Endothelial cell of umbilical vein (primary cell): ENCODE measurements at regions of chr5 and their contacts with region 1.

Region 1: DNA sequence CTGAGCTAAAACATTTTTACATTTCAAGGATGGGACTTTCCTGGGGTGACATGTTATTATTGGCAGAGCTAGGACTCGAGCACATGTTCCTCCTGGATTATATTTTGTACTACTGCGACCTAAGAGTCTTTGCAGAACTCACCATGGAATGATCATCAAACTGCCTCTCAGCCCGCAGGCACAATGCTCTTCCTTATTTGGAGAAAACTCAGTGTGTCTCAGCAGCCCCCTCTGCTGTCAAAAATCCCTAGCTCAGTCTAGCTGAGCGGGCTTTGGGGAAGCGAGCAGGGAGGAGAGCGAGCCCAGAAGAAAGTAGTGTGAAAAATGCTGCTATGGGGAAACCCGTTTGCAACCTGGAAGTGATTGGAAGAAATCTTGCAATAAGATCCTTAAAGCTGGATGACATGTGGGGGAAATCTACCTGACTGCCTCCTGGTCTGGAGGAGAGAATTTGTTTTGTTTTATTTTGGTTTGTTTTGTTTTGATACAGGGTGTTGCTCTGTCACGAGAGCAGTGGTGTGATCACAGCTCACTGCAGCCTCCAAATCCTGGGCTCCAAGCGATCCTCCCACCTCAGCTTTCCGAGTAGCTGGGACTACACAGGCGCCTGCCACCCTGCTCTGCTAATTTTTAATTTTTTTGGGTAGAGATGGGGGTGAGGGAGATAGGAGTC is 89.9 kb upstream of the CLINT1 start:
- DNase-seq: peak; percentile 90
- H3K4me3 ChIP-seq: no peak overlapping the region
- H3K27ac ChIP-seq: no peak overlapping the region
- H3K4me1 ChIP-seq: no peaks in the 10 kb centered on the region
- H3K27me3 ChIP-seq: peaks cover 0 to 4% of the 10 kb centered on the region in 2 experiments
- CTCF ChIP-seq: peak; percentile 83 to 84
- POLR2A ChIP-seq: no peak

Region 2: GRCh38 chr5:157812086-157812485 is 136.8 kb before region 1 on chr5:
- CTCF ChIA-PET with region 1: interaction called, 59 read pairs
- POLR2A ChIA-PET with region 1: no interaction called
- dilution Hi-C with region 1: no loop called
- intact Hi-C with region 1: loop called (anchors 1 kb)
- DNase-seq: no peak
- H3K4me3 ChIP-seq: no peak overlapping the region
- H3K27ac ChIP-seq: no peak overlapping the region
- H3K4me1 ChIP-seq: peaks cover 16% of the 10 kb centered on the region
- H3K27me3 ChIP-seq: no peaks in the 10 kb centered on the region
- CTCF ChIP-seq: no peak
- POLR2A ChIP-seq: no peak

Region 3: DNA sequence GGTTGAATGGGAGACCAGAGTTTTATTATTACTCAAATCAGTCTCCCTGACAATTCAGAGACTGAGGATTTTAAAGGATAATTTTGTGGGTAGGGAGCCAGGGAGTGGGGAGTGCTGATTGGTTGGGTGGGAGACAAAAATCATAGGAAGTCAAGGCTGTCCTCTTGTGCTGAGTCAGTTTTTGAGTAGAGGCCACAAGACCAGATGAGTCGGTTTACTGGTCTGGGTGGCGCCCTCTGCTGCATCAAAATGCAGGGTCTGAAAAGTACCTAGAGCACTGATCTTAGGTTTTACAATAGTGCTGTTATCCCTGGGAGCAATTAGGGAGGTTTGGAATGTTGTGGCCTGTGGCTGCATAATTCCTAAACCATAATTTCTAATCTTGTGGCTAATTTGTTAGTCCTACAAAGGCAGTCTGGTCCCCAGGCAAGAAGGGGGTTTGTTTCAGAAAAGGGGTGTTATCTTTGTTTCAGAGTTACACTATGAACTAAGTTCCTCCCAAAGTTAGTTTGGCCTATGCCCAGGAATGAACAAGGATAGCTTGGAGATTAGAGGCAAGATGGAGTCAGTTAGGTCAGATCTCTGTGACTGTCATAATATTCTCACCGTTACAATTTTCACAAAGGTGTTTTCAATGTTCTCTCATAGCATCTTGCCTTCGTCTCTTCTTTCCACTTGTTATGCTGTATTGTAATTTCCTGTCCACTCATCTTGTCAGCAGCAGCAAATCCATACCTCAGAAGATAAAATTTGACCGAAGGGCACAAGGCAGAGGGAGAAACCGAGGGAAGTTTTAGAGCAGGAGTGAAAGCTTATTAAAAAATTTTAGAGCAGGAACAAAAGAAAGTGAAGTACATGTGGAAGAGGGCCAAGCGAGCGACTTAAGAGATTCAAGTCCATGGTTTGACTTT is 30.7 kb before region 1 on chr5:
- CTCF ChIA-PET with region 1: interaction called, 11 read pairs
- POLR2A ChIA-PET with region 1: no interaction called
- dilution Hi-C with region 1: no loop called
- intact Hi-C with region 1: loop called (anchors 1 kb)
- DNase-seq: peak; percentile 74
- H3K4me3 ChIP-seq: no peak overlapping the region
- H3K27ac ChIP-seq: no peak overlapping the region
- H3K4me1 ChIP-seq: peaks cover 8% of the 10 kb centered on the region
- H3K27me3 ChIP-seq: no peaks in the 10 kb centered on the region
- CTCF ChIP-seq: peak; percentile 57 to 64
- POLR2A ChIP-seq: no peak

Region 4: DNA sequence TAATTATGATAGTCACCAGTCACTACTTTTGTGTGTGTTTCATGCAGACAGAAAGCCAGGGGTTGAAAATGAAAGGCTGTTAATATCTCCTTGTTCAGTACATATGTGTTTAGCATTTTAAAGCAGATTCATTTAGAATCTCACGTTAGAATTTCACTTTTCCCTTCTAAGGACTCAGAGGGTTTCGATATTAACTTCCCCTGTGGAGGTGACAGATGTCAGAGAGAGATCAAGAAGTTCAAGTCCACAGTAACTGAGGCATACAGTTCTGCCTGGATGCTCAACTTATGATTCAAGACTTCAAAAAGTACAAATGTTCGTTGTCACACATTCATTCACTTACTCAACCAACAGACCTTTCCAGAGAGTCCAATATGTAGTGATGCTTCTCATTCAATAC is 899.8 kb after region 1 on chr5:
- CTCF ChIA-PET with region 1: no interaction called
- POLR2A ChIA-PET with region 1: no interaction called
- dilution Hi-C with region 1: no loop called
- intact Hi-C with region 1: no loop called
- DNase-seq: no peak
- H3K4me3 ChIP-seq: no peak overlapping the region
- H3K27ac ChIP-seq: no peak overlapping the region
- H3K4me1 ChIP-seq: no peaks in the 10 kb centered on the region
- H3K27me3 ChIP-seq: no peaks in the 10 kb centered on the region
- CTCF ChIP-seq: no peak
- POLR2A ChIP-seq: no peak

Region 5: GRCh38 chr5:159100025-159100781 is 1151.3 kb after region 1 on chr5:
- CTCF ChIA-PET with region 1: no interaction called
- POLR2A ChIA-PET with region 1: no interaction called
- dilution Hi-C with region 1: no loop called
- intact Hi-C with region 1: loop called (anchors 5 kb)
- DNase-seq: peak; percentile 87
- H3K4me3 ChIP-seq: peak overlapping the region; percentile 26 to 67 (median 38)
- H3K27ac ChIP-seq: no peak overlapping the region
- H3K4me1 ChIP-seq: peaks cover 12% of the 10 kb centered on the region
- H3K27me3 ChIP-seq: peaks cover 65 to 70% of the 10 kb centered on the region in 2 experiments
- CTCF ChIP-seq: no peak
- POLR2A ChIP-seq: no peak